ENCODE measurements at regions of chr9 and their contacts with region 1.

Region 1: DNA sequence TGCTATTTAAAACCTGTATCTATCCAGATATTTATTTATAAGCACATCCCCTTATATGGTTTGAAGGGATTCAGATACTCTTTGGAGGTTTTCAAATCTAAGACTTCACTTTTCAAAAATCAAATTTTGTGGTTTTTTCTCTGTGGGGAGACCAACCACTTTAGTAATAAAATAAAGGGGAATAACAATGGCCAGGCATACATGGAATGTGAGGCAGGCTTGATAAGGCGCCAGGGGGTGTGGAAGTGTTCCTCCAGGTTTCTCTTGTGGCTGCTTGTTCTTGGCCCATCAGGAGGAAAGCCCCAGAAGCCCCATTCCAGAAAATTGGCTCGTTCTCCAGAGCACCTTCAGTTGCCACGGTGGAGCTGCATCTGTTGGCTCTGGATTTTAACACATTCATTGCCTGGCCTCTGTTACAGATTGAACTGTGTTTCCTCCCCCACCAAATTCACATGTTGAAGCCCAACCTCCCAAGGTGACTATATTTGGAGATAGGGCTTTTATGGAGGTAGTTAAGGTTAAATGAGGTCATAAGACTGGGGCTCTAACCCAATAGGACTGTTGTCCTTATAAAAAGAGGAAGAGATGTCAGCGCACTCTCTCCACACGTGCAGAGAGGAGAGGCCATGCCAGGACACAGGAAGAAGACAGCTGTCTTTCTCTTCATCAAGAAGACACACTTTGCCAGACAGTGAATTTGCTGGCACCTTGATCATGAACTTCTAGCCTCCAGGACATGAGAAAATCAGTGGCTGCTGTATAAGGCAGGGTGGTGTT is 195.9 kb downstream of the TMEM38B start:
- DNase-seq: no peak
- H3K4me3 ChIP-seq: no peak overlapping the region
- H3K27ac ChIP-seq: no peak overlapping the region
- H3K4me1 ChIP-seq: no peaks in the 10 kb centered on the region
- H3K27me3 ChIP-seq: no peaks in the 10 kb centered on the region
- CTCF ChIP-seq: no peak
- POLR2A ChIP-seq: no peak

Region 2: DNA sequence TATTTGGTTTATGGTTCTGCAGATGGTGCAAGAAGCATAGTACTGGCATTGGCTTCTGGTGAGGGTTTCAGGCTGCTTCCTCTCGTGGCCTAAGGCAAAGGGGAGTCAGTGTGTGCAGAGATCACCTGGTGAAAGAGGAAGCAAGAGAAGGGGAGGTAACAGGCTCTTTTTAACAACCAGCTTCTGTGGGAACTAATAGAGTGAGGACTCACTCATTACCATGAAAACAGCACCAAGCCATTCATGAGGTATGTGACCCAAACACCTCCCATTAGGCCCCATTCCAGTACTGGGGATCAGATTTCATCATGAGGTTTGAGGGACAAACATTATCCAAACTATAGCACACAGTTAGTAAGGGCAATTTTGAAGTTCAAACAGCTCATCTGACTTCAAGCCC is 67.6 kb after region 1 on chr9:
- CTCF ChIA-PET with region 1: no interaction called
- POLR2A ChIA-PET with region 1: no interaction called
- dilution Hi-C with region 1: no loop called
- intact Hi-C with region 1: loop called (anchors 10 kb)
- DNase-seq: no peak
- H3K4me3 ChIP-seq: no peak overlapping the region
- H3K27ac ChIP-seq: no peak overlapping the region
- H3K4me1 ChIP-seq: no peaks in the 10 kb centered on the region
- H3K27me3 ChIP-seq: no peaks in the 10 kb centered on the region
- CTCF ChIP-seq: no peak
- POLR2A ChIP-seq: no peak

Region 3: GRCh38 chr9:106324591-106325280 is 434.5 kb after region 1 on chr9:
- CTCF ChIA-PET with region 1: no interaction called
- POLR2A ChIA-PET with region 1: no interaction called
- dilution Hi-C with region 1: no loop called
- intact Hi-C with region 1: no loop called
- DNase-seq: no peak
- H3K4me3 ChIP-seq: no peak overlapping the region
- H3K27ac ChIP-seq: no peak overlapping the region
- H3K4me1 ChIP-seq: no peaks in the 10 kb centered on the region
- H3K27me3 ChIP-seq: no peaks in the 10 kb centered on the region
- CTCF ChIP-seq: no peak
- POLR2A ChIP-seq: no peak